Thyroid gland (tissue), 4 donors: ENCODE measurements at regions of chr14 and their contacts with region 1.

Region 1: DNA sequence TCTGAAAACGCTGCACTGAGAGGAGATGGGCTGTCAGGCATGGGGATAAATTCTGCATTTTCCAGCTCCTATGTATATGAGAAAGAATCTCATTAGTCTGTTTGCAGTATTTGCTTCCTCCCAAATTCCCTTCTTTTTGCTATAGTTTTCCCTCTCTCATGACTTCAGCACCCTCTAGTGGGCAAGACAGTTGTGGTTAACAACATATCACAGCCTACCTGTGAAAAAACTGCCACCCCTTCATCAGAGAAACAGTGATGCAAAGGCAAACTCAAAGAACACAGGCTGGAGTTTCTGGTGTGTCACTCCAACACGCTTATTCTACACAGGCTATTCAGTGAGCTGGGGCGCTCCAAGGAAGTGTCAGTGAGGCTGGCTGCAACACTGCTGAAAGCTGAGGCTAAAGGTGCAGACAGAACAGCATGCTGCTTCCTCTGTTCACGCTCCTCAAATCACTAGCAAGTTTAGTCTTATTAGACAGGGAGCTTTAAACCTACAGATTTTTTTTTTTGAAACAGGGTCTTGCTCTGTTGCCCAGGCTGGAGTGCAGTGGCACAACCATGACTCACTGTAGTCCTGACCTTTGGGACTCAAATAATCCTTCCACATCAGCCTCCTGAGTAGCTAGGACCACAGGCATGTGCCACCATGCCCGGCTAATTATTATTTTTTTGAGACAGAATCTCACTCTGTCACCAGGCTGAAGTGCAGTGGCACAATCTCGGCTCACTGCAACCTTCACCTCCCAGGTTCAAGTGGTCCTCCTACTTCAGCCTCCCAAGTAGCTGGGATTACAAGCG is 19.3 kb downstream of the ZC2HC1C start:
- DNase-seq: peak; percentile 45 to 66
- H3K4me3 ChIP-seq: no peak overlapping the region
- H3K27ac ChIP-seq: peak overlapping the region in 1 of 3 donors; percentile 10
- H3K4me1 ChIP-seq: peaks cover 7 to 8% of the 10 kb centered on the region in 2 donors
- H3K27me3 ChIP-seq: no peaks in the 10 kb centered on the region
- CTCF ChIP-seq: peak; percentile 55 to 95 (median 82)
- POLR2A ChIP-seq: no peak

Region 2: GRCh38 chr14:74860906-74861733 is 227.7 kb before region 1 on chr14:
- intact Hi-C with region 1: loop called (anchors 5 kb)
- DNase-seq: peak; percentile 92 to 95
- H3K4me3 ChIP-seq: no peak overlapping the region
- H3K27ac ChIP-seq: no peak overlapping the region
- H3K4me1 ChIP-seq: peaks cover 0 to 14% of the 10 kb centered on the region in 2 donors
- H3K27me3 ChIP-seq: no peaks in the 10 kb centered on the region
- CTCF ChIP-seq: peak; percentile 75 to 94 (median 86)
- POLR2A ChIP-seq: no peak

Region 3: DNA sequence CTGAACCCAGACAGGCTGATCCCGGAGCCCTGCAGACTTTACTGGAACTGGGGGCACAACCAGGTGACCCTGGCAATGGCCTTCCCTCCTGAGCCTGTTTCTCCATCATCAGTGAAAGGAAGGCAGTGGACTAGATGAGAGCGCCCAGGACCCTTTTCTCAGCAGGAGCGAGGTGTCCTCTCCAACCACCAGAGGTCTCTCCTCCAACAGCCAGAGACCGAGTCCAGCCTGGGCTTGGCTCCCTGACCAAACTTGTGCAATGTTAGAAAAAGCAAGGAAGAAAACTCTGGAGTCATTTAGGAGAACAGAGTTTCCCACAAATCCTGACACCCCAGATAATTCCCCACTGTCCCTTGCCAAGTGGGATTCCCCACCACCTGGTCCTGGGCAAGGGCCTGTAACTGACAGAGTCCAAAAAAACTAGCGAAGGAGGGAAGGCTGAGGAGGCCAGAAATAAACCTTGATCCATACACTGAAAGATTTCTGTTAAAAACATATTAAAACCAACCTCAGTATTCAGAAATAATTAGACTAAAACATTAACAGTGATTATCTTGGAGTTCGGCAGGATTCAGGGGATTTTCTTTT is 174.7 kb before region 1 on chr14:
- intact Hi-C with region 1: loop called (anchors 10 kb)
- DNase-seq: peak; percentile 79 to 85
- H3K4me3 ChIP-seq: no peak overlapping the region
- H3K27ac ChIP-seq: peak overlapping the region in 2 of 3 donors; percentile 15 to 40
- H3K4me1 ChIP-seq: peaks cover 17 to 28% of the 10 kb centered on the region in 2 donors
- H3K27me3 ChIP-seq: no peaks in the 10 kb centered on the region
- CTCF ChIP-seq: peak; percentile 43 to 86 (median 80)
- POLR2A ChIP-seq: no peak

Region 4: GRCh38 chr14:74945823-74946682 is 142.7 kb before region 1 on chr14:
- intact Hi-C with region 1: loop called (anchors 5 kb)
- DNase-seq: peak; percentile 70 to 73
- H3K4me3 ChIP-seq: no peak overlapping the region
- H3K27ac ChIP-seq: peak overlapping the region; percentile 12 to 67 (median 31)
- H3K4me1 ChIP-seq: peaks cover 3 to 32% of the 10 kb centered on the region in 2 donors
- H3K27me3 ChIP-seq: no peaks in the 10 kb centered on the region
- CTCF ChIP-seq: peak; percentile 79 to 90 (median 80)
- POLR2A ChIP-seq: no peak